WTC11 (cell line): ENCODE measurements at regions of chr19 and their contacts with region 1.

Region 1: DNA sequence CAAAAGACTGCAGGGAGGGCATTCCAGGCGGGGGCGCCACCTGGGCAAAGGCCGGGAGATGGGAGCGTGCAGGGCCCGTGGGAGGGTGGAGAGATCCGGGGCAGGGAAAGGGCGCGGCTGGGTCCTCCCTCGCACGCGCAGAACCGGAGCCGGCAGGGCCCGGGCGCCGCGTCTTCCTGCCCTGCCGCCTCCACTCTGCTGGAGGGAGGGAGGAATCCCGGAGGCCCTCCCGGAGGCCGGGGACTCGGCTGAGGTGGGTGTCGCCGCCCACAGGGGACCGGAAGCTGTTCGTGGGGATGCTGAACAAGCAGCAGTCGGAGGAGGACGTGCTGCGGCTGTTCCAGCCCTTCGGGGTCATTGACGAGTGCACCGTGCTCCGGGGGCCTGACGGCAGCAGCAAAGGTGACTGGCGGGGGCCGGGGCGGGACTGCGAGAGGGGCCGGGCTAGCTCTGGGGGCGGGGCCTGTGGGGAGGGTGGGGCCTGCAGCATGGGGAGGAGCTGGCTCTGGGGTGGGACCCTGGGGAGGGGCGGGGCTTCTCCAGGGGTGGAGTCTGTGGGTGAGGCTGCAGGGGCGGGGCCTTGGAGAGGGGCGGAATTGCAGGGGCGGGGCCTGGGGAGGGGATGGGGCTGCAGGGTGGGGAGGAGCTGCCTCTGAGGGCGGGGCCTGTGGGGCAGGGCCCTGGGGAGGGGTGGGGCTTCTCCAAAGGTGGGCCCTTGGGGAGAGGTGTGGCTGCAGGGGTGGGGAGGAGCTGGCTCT is 51.3 kb downstream of the CELF5 start:
- DNase-seq: peak; percentile 98
- ATAC-seq: peak; percentile 78
- H3K4me3 Mint-ChIP-seq: peak overlapping the region; percentile 83
- H3K27ac Mint-ChIP-seq: peak overlapping the region; percentile 49; the same call in 1 of the 2 replicates
- H3K4me1 Mint-ChIP-seq: peaks cover 16% of the 10 kb centered on the region
- H3K27me3 Mint-ChIP-seq: peaks cover 33% of the 10 kb centered on the region
- CTCF ChIP-seq: peak; percentile 76; the same call in 1 of the 2 replicates

Region 2: GRCh38 chr19:2977001-2977685 is 298.6 kb before region 1 on chr19 and contains the start of gene TLE6:
- CTCF ChIA-PET with region 1: interaction called, 15 read pairs
- POLR2A ChIA-PET with region 1: no interaction called
- DNase-seq: peak; percentile 99
- ATAC-seq: peak; percentile 86
- H3K4me3 Mint-ChIP-seq: peak within 1 kb of the TSS; percentile 71
- H3K27ac Mint-ChIP-seq: no peak within 1 kb of the TSS
- H3K4me1 Mint-ChIP-seq: peaks cover 27% of the 10 kb centered on the region
- H3K27me3 Mint-ChIP-seq: peaks cover 58% of the 10 kb centered on the region
- CTCF ChIP-seq: no peak
- total RNA-seq, gene TLE6: 2.5 to 3.3 TPM (median 3.1 TPM) in 3 replicates

Region 3: GRCh38 chr19:3146677-3147100 is 129.1 kb before region 1 on chr19:
- CTCF ChIA-PET with region 1: no interaction called
- POLR2A ChIA-PET with region 1: no interaction called
- DNase-seq: peak; percentile 84
- ATAC-seq: peak; percentile 77
- H3K4me3 Mint-ChIP-seq: no peak overlapping the region
- H3K27ac Mint-ChIP-seq: no peak overlapping the region
- H3K4me1 Mint-ChIP-seq: peaks cover 3% of the 10 kb centered on the region; the same call in 1 of the 2 replicates
- H3K27me3 Mint-ChIP-seq: no peaks in the 10 kb centered on the region; the same call in 1 of the 2 replicates
- CTCF ChIP-seq: peak; percentile 90

Region 4: DNA sequence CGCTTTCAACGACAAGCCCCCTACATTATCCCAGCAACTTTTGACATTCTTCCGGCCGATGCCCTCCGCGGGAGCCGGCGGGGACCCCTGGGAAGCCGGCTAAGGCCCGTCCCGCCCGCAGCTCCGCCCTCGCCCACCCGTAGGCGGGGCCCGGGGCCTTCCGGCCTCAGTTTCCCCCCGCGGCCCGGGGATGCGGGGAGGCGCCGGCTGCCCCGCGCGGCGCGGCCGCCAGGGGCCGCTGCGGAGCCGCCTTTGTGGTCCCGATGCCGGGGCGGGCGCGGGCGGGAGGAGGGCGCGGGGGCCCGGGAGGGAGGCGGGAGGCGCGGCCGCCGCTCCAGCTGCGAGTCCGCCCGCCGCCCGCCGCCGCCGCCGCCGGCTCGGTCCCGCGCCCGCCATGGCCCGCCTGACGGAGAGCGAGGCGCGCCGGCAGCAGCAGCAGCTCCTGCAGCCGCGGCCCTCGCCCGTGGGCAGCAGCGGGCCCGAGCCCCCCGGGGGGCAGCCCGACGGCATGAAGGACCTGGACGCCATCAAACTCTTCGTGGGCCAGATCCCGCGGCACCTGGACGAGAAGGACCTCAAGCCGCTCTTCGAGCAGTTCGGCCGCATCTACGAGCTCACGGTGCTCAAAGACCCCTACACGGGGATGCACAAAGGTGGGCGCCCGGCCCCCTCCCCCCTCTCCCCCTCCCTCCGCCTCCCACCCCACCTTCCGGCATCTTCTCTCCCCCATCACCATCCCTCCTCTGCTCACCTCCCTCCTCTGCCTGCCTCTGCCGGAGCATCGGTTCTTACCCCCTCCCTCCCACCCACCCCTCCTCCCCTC is 51.2 kb before region 1 on chr19 and contains the start of gene CELF5:
- CTCF ChIA-PET with region 1: interaction called, 33 read pairs
- POLR2A ChIA-PET with region 1: no interaction called
- DNase-seq: peak; percentile 68
- ATAC-seq: peak; percentile 60
- H3K4me3 Mint-ChIP-seq: peak within 1 kb of the TSS; percentile 59
- H3K27ac Mint-ChIP-seq: no peak within 1 kb of the TSS
- H3K4me1 Mint-ChIP-seq: peaks cover 7% of the 10 kb centered on the region
- H3K27me3 Mint-ChIP-seq: peaks cover 8% of the 10 kb centered on the region; the same call in 1 of the 2 replicates
- CTCF ChIP-seq: peak; percentile 48; the same call in 1 of the 2 replicates
- total RNA-seq, gene CELF5: 7.7 to 10.6 TPM (median 9.0 TPM) in 3 replicates

Region 5: GRCh38 chr19:3250675-3251074 is 25.1 kb before region 1 on chr19:
- CTCF ChIA-PET with region 1: interaction called, 25 read pairs
- POLR2A ChIA-PET with region 1: no interaction called
- DNase-seq: peak; percentile 45
- ATAC-seq: peak; percentile 46; the same call in 1 of the 2 replicates
- H3K4me3 Mint-ChIP-seq: no peak overlapping the region
- H3K27ac Mint-ChIP-seq: no peak overlapping the region
- H3K4me1 Mint-ChIP-seq: peaks cover 3% of the 10 kb centered on the region
- H3K27me3 Mint-ChIP-seq: peaks cover 6% of the 10 kb centered on the region
- CTCF ChIP-seq: peak; percentile 64

Region 6: GRCh38 chr19:3289971-3290569 is 14.3 kb after region 1 on chr19:
- CTCF ChIA-PET with region 1: interaction called, 105 read pairs
- POLR2A ChIA-PET with region 1: interaction called, 21 read pairs
- DNase-seq: no peak
- ATAC-seq: no peak
- H3K4me3 Mint-ChIP-seq: no peak overlapping the region
- H3K27ac Mint-ChIP-seq: no peak overlapping the region
- H3K4me1 Mint-ChIP-seq: no peaks in the 10 kb centered on the region; the same call in 1 of the 2 replicates
- H3K27me3 Mint-ChIP-seq: peaks cover 3% of the 10 kb centered on the region; the same call in 1 of the 2 replicates
- CTCF ChIP-seq: no peak

Region 7: GRCh38 chr19:3346677-3347353 is 71.1 kb after region 1 on chr19:
- CTCF ChIA-PET with region 1: no interaction called
- POLR2A ChIA-PET with region 1: no interaction called
- DNase-seq: no peak
- ATAC-seq: no peak
- H3K4me3 Mint-ChIP-seq: no peak overlapping the region
- H3K27ac Mint-ChIP-seq: no peak overlapping the region
- H3K4me1 Mint-ChIP-seq: no peaks in the 10 kb centered on the region
- H3K27me3 Mint-ChIP-seq: peaks cover 41% of the 10 kb centered on the region
- CTCF ChIP-seq: no peak

Region 8: GRCh38 chr19:3429581-3430080 is 153.9 kb after region 1 on chr19:
- CTCF ChIA-PET with region 1: interaction called, 12 read pairs
- POLR2A ChIA-PET with region 1: no interaction called
- DNase-seq: peak; percentile 94
- ATAC-seq: peak; percentile 90
- H3K4me3 Mint-ChIP-seq: no peak overlapping the region
- H3K27ac Mint-ChIP-seq: no peak overlapping the region
- H3K4me1 Mint-ChIP-seq: peaks cover 6% of the 10 kb centered on the region
- H3K27me3 Mint-ChIP-seq: peaks cover 8% of the 10 kb centered on the region
- CTCF ChIP-seq: peak; percentile 99